Right cardiac atrium (tissue), 5 donors: ENCODE measurements at regions of chr16 and their contacts with region 1.

Region 1: DNA sequence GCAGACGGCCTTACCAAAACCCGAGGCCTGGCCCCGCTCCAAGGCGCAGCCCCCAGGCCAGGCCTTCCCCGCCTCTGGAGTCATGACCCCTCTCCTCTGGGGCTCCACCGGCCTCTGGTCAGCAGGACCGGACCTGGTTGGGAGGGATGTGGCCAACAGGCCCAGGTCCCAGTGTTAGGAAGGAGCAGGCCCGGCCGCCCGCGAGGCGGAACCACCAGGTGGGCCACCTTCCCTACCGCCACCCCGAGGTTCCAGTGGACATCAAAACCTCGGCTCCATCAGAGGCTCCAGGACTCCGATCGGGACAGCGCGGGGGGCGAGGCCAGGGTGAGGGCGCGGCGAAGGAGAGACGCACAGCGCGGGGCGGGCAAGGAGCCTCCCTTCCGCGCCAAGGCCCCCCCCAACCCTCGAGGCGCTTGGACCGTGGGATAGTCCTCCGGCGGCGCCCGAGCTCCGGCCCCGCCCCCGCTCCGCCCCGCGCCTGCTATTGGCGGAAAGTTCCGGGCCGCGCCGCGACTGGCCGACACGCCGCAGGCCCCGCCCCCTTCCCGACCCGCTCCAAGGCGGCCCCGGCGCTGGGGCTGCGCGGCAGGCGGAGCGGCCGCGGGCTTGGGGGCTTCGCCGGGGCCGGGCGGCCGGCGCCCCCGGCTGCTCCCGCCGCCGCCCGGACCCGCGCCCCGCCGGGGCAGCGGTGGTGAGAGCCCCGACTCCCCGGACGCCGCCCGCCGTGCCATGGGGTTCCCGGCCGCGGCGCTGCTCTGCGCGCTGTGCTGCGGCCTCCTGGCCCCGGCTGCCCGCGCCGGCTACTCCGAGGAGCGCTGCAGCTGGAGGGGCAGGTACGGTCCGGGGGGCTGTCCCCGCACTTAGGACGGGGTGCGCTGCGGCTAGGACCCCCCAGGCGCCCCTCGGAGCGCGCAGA is at the start of gene METRN:
- DNase-seq: peak; percentile 93 to 99 (median 97)
- ATAC-seq: peak; percentile 88 to 90
- H3K4me3 ChIP-seq: peak within 1 kb of the TSS; percentile 91
- H3K27ac ChIP-seq: no peak within 1 kb of the TSS
- H3K4me1 ChIP-seq: peaks cover under 1% of the 10 kb centered on the region
- H3K27me3 ChIP-seq: no peaks in the 10 kb centered on the region
- total RNA-seq, gene METRN: 65.2 to 75.0 (median 69.4) TPM

Region 2: GRCh38 chr16:200388-200787 is 514.4 kb before region 1 on chr16:
- intact Hi-C with region 1: no loop called
- DNase-seq: no peak
- ATAC-seq: no peak
- H3K4me3 ChIP-seq: no peak overlapping the region
- H3K27ac ChIP-seq: no peak overlapping the region
- H3K4me1 ChIP-seq: no peaks in the 10 kb centered on the region
- H3K27me3 ChIP-seq: no peaks in the 10 kb centered on the region

Region 3: GRCh38 chr16:303760-304505 is 410.9 kb before region 1 on chr16:
- intact Hi-C with region 1: no loop called
- DNase-seq: peak in 1 of 3 donors; percentile 33
- ATAC-seq: no peak
- H3K4me3 ChIP-seq: no peak overlapping the region
- H3K27ac ChIP-seq: no peak overlapping the region
- H3K4me1 ChIP-seq: no peaks in the 10 kb centered on the region
- H3K27me3 ChIP-seq: no peaks in the 10 kb centered on the region

Region 4: GRCh38 chr16:788394-789126 is 73.7 kb after region 1 on chr16 and contains the start of gene CHTF18:
- intact Hi-C with region 1: loop called (anchors 2 to 10 kb)
- DNase-seq: peak; percentile 89 to 98 (median 96)
- ATAC-seq: peak; percentile 90 to 91
- H3K4me3 ChIP-seq: peak within 1 kb of the TSS; percentile 89
- H3K27ac ChIP-seq: peak within 1 kb of the TSS; percentile 4
- H3K4me1 ChIP-seq: peaks cover 4% of the 10 kb centered on the region
- H3K27me3 ChIP-seq: no peaks in the 10 kb centered on the region
- total RNA-seq, gene CHTF18: 4.0 to 6.9 (median 4.9) TPM

Region 5: GRCh38 chr16:1054660-1055556 is 340.1 kb after region 1 on chr16:
- intact Hi-C with region 1: loop called in 1 of 4 experiments (anchors 10 kb)
- DNase-seq: peak; percentile 73 to 90 (median 86)
- ATAC-seq: peak; percentile 61 to 64
- H3K4me3 ChIP-seq: no peak overlapping the region
- H3K27ac ChIP-seq: no peak overlapping the region
- H3K4me1 ChIP-seq: no peaks in the 10 kb centered on the region
- H3K27me3 ChIP-seq: no peaks in the 10 kb centered on the region